ENCODE measurements at regions of chr10 and their contacts with region 1.

Region 1: GRCh38 chr10:100986952-100987750 is at the starts of genes MRPL43 and TWNK:
- DNase-seq: peak; percentile 74 to 92 (median 81)
- ATAC-seq: peak; percentile 96
- H3K4me3 ChIP-seq: peak within 1 kb of the TSS; percentile 96
- H3K4me3 Mint-ChIP-seq: peak within 1 kb of the TSS; percentile 97
- H3K27ac ChIP-seq: peak within 1 kb of the TSS; percentile 52 to 67
- H3K27ac Mint-ChIP-seq: peak within 1 kb of the TSS; percentile 86
- H3K4me1 ChIP-seq: peaks cover 41% of the 10 kb centered on the region
- H3K4me1 Mint-ChIP-seq: peaks cover 26% of the 10 kb centered on the region
- H3K27me3 ChIP-seq: no peaks in the 10 kb centered on the region
- H3K27me3 Mint-ChIP-seq: no peaks in the 10 kb centered on the region
- CTCF ChIP-seq: no peak
- total RNA-seq, gene MRPL43: 28.5 to 31.0 TPM
- total RNA-seq, gene TWNK: 2.7 to 2.8 TPM

Region 2: GRCh38 chr10:100788002-100788900 is 198.9 kb before region 1 on chr10:
- CTCF ChIA-PET with region 1: no interaction called
- POLR2A ChIA-PET with region 1: no interaction called
- intact Hi-C with region 1: no loop called
- DNase-seq: no peak
- ATAC-seq: no peak
- H3K4me3 ChIP-seq: no peak overlapping the region
- H3K4me3 Mint-ChIP-seq: no peak overlapping the region
- H3K27ac ChIP-seq: no peak overlapping the region
- H3K27ac Mint-ChIP-seq: no peak overlapping the region
- H3K4me1 ChIP-seq: no peaks in the 10 kb centered on the region
- H3K4me1 Mint-ChIP-seq: no peaks in the 10 kb centered on the region
- H3K27me3 ChIP-seq: peaks cover 4 to 8% of the 10 kb centered on the region in 2 experiments
- H3K27me3 Mint-ChIP-seq: peaks cover 65% of the 10 kb centered on the region
- CTCF ChIP-seq: no peak

Region 3: GRCh38 chr10:100998991-100999741 is 12.0 kb after region 1 on chr10:
- CTCF ChIA-PET with region 1: interaction called, 9 read pairs
- POLR2A ChIA-PET with region 1: interaction called, 34 read pairs
- intact Hi-C with region 1: no loop called
- DNase-seq: peak; percentile 61 to 90 (median 74)
- ATAC-seq: peak; percentile 66
- H3K4me3 ChIP-seq: peak overlapping the region; percentile 97
- H3K4me3 Mint-ChIP-seq: peak overlapping the region; percentile 90
- H3K27ac ChIP-seq: peak overlapping the region; percentile 82 to 90
- H3K27ac Mint-ChIP-seq: peak overlapping the region; percentile 76
- H3K4me1 ChIP-seq: peaks cover 41% of the 10 kb centered on the region
- H3K4me1 Mint-ChIP-seq: peaks cover 25% of the 10 kb centered on the region
- H3K27me3 ChIP-seq: no peaks in the 10 kb centered on the region
- H3K27me3 Mint-ChIP-seq: no peaks in the 10 kb centered on the region
- CTCF ChIP-seq: peak; percentile 96

Region 4: GRCh38 chr10:102555781-102556328 is 1568.7 kb after region 1 on chr10:
- CTCF ChIA-PET with region 1: no interaction called
- POLR2A ChIA-PET with region 1: no interaction called
- intact Hi-C with region 1: no loop called
- DNase-seq: no peak
- ATAC-seq: no peak
- H3K4me3 ChIP-seq: no peak overlapping the region
- H3K4me3 Mint-ChIP-seq: no peak overlapping the region
- H3K27ac ChIP-seq: no peak overlapping the region
- H3K27ac Mint-ChIP-seq: no peak overlapping the region
- H3K4me1 ChIP-seq: no peaks in the 10 kb centered on the region
- H3K4me1 Mint-ChIP-seq: peaks cover 12% of the 10 kb centered on the region
- H3K27me3 ChIP-seq: no peaks in the 10 kb centered on the region
- H3K27me3 Mint-ChIP-seq: no peaks in the 10 kb centered on the region
- CTCF ChIP-seq: no peak

Measured in CD4-positive, alpha-beta T cell (primary cell).